Aorta (tissue), 5 donors: ENCODE measurements at regions of chr12 and their contacts with region 1.

Region 1: GRCh38 chr12:3073438-3074250 is 3.5 kb upstream of the TSPAN9 start:
- DNase-seq: peak; percentile 89 to 96
- ATAC-seq: peak; percentile 66
- H3K4me3 ChIP-seq: no peak overlapping the region
- H3K27ac ChIP-seq: peak overlapping the region in 1 of 2 donors; percentile 29
- H3K4me1 ChIP-seq: peaks cover 0 to 3% of the 10 kb centered on the region in 2 donors
- H3K27me3 ChIP-seq: no peaks in the 10 kb centered on the region

Region 2: GRCh38 chr12:3122835-3123678 is 49.4 kb after region 1 on chr12:
- intact Hi-C with region 1: loop called (anchors 5 kb)
- DNase-seq: peak; percentile 79 to 91
- ATAC-seq: peak; percentile 51
- H3K4me3 ChIP-seq: no peak overlapping the region
- H3K27ac ChIP-seq: peak overlapping the region in 1 of 2 donors; percentile 32
- H3K4me1 ChIP-seq: no peaks in the 10 kb centered on the region
- H3K27me3 ChIP-seq: no peaks in the 10 kb centered on the region

Region 3: GRCh38 chr12:3135522-3136461 is 62.1 kb after region 1 on chr12:
- intact Hi-C with region 1: loop called in 1 of 2 experiments (anchors 5 kb)
- DNase-seq: peak; percentile 43 to 44
- ATAC-seq: peak; percentile 79
- H3K4me3 ChIP-seq: no peak overlapping the region
- H3K27ac ChIP-seq: no peak overlapping the region
- H3K4me1 ChIP-seq: no peaks in the 10 kb centered on the region
- H3K27me3 ChIP-seq: no peaks in the 10 kb centered on the region

Region 4: GRCh38 chr12:3202734-3203446 is 129.2 kb after region 1 on chr12:
- intact Hi-C with region 1: loop called (anchors 5 kb)
- DNase-seq: peak in 1 of 2 donors; percentile 92
- ATAC-seq: peak; percentile 64
- H3K4me3 ChIP-seq: no peak overlapping the region
- H3K27ac ChIP-seq: no peak overlapping the region
- H3K4me1 ChIP-seq: peaks cover 0 to 2% of the 10 kb centered on the region in 2 donors
- H3K27me3 ChIP-seq: no peaks in the 10 kb centered on the region

Region 5: GRCh38 chr12:3236345-3237187 is 162.9 kb after region 1 on chr12:
- intact Hi-C with region 1: no loop called
- DNase-seq: no peak
- ATAC-seq: no peak
- H3K4me3 ChIP-seq: no peak overlapping the region
- H3K27ac ChIP-seq: no peak overlapping the region
- H3K4me1 ChIP-seq: no peaks in the 10 kb centered on the region
- H3K27me3 ChIP-seq: no peaks in the 10 kb centered on the region

Region 6: DNA sequence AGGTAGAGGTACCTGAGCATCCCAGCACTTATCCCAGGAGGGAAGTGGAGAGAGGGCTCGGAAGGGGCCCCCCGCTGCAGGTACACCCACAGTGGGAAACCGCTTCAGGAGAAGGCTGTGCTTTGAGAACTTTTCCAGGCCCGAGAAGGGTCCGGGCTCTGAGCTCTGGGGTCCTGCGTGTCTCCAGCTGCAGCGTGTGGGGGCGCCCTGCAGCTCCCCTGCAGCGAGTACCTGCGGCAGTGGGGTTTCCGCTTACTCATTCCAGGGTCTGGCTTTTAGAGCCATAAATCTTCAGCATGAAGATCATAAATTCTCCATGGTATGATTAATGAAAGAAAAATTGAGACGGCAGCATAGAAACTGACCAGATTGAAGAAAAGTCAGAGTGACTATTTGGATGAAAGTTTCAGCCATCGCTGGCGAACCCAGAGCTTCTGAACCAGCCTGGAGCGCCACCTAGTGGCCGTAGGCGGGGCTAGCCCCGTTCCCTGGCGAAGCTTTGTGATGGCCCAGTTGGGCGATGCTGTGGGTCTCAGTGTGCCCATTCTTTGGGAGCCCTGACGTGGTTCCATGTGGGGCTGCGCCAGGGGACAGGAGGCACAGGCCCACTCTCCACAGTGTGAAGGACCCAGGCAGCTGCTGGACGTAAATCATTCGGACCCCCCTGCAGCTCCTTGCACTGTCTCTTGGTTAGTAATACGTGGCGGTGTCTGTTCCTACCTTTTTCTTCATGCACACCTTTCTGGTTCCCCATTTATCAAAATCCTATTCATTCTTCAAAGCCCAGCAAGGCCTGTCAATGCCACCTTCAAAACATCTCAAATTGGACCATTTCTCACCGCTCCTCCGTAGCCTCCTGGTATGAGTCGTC is 201.8 kb after region 1 on chr12:
- intact Hi-C with region 1: loop called (anchors 2 to 5 kb)
- DNase-seq: peak; percentile 83 to 93
- ATAC-seq: peak; percentile 80
- H3K4me3 ChIP-seq: no peak overlapping the region
- H3K27ac ChIP-seq: no peak overlapping the region
- H3K4me1 ChIP-seq: no peaks in the 10 kb centered on the region
- H3K27me3 ChIP-seq: no peaks in the 10 kb centered on the region